GM12878 (cell line): ENCODE measurements at regions of chr7 and their contacts with region 1.

Region 1: DNA sequence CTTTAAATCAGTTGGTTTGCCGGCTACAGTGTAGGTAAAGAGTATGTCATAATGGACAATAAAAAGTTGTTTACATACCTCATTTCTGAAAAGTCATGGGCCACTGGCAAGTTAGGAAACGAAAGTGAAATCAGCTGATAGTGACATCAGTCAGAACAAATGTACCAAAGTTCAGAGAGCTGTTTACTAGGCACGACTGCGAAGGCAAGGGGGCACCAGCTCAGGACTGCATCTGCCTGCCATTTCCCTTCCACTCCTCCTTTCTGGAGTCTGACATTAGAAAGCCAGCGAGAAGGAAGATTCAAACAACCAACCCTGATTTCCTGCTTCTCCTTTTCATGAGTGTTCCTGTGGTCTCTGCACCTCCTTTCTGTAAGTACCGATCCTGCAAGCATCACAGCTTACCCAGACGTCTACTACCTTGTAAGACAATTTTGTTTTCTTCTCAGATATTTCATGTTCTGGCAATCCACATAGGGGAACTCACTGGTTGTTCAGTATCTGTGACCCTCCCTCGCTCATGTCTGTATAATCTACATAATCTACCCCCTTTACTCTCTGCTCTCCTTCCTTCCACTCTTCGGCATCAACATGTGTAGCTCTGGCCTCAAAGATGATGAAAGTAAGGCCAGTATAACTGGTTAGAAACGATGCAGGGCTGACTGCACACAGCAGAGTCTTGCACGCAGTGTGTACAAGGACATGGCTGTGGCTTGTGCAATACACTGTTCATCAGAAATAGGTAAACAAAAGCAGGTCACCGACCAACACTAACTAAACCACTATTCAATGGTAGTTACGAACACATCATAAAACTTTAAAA is at the start of gene TMEM140:
- DNase-seq: peak; percentile 90
- ATAC-seq: peak; percentile 78
- H3K4me3 ChIP-seq: peak within 1 kb of the TSS; percentile 67
- H3K27ac ChIP-seq: peak within 1 kb of the TSS; percentile 73
- H3K4me1 ChIP-seq: peaks cover 27% of the 10 kb centered on the region
- H3K27me3 ChIP-seq: no peaks in the 10 kb centered on the region
- CTCF ChIP-seq: no peak
- EP300 ChIP-seq: peak; percentile 86 to 89; a peak in 3 of 4 replicates
- POLR2A ChIP-seq: peak; percentile 82
- RAD21 ChIP-seq: 0 out of 2 replicates have a peak, but pooled peaks have one; percentile 2
- polyA plus RNA-seq, gene TMEM140: 0.85 to 1.1 TPM

Region 2: DNA sequence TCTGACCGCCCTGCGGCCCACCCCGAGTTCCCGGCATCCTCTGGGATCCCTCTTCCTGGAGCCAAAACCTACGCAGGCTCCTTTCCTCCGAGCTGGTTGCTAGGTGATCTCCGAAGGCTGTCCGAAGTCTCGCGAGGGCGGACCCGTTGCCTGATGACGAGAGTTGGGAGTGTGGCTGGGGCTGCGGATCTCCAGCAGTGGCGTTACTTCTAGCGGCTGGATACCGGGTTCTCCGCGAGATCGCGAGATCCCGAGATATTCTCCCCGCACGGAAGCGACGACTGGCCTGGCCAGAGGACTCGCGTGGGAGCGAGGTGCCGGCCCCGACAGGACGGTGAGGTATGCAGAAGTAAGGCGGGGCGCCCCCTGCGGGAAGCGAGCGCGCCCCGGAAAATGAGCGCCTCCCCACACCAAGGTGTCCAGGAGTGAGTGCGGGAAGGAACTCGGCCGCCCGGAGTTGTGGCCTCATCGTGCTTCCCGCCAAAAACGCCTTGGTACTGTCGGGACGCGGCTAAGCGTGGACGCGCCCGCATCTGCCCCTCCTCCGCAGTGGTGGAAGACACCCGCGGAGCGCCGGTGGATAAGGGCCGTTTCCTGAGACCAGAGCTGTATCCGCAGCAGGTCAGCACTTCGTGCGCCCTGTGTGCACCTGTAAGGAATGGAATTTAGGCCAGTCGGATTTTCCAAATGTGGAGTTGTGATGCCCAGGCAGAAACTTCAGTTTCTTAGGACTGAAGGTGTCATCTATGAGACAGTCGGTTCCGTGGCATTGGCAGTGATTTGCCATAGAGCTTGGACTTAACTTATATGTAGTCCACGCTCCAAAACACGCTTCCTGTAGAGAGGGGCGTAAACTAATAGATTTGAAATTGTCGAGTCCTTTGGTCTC is 161.5 kb before region 1 on chr7 and contains the start of gene AGBL3:
- CTCF ChIA-PET with region 1: interaction called, 69 read pairs
- POLR2A ChIA-PET with region 1: interaction called, 121 read pairs
- RAD21 ChIA-PET with region 1: interaction called, 154 read pairs
- SMC1A ChIA-PET with region 1: interaction called, 293 read pairs
- in situ Hi-C with region 1: no loop called
- intact Hi-C with region 1: no loop called
- DNase-seq: peak; percentile 84
- ATAC-seq: peak; percentile 85
- H3K4me3 ChIP-seq: peak within 1 kb of the TSS; percentile 85
- H3K27ac ChIP-seq: peak within 1 kb of the TSS; percentile 97
- H3K4me1 ChIP-seq: peaks cover 11% of the 10 kb centered on the region
- H3K27me3 ChIP-seq: no peaks in the 10 kb centered on the region
- CTCF ChIP-seq: peak; percentile 59 to 75 (median 73)
- EP300 ChIP-seq: peak in 1 of 2 experiments; percentile 41; a peak in 1 of 4 replicates
- POLR2A ChIP-seq: peak; percentile 88
- RAD21 ChIP-seq: no peak
- polyA plus RNA-seq, gene AGBL3: 0.82 to 1.4 TPM

Region 3: GRCh38 chr7:135102372-135102771 is 45.7 kb before region 1 on chr7:
- CTCF ChIA-PET with region 1: no interaction called
- POLR2A ChIA-PET with region 1: no interaction called
- RAD21 ChIA-PET with region 1: interaction called, 3 read pairs
- SMC1A ChIA-PET with region 1: interaction called, 6 read pairs
- in situ Hi-C with region 1: no loop called
- intact Hi-C with region 1: loop called (anchors 5 kb)
- DNase-seq: peak; percentile 41
- ATAC-seq: peak; percentile 99
- H3K4me3 ChIP-seq: no peak overlapping the region
- H3K27ac ChIP-seq: no peak overlapping the region
- H3K4me1 ChIP-seq: no peaks in the 10 kb centered on the region
- H3K27me3 ChIP-seq: no peaks in the 10 kb centered on the region
- CTCF ChIP-seq: no peak
- EP300 ChIP-seq: peak in 1 of 2 experiments; percentile 64; a peak in 1 of 4 replicates
- POLR2A ChIP-seq: no peak
- RAD21 ChIP-seq: no peak

Region 4: DNA sequence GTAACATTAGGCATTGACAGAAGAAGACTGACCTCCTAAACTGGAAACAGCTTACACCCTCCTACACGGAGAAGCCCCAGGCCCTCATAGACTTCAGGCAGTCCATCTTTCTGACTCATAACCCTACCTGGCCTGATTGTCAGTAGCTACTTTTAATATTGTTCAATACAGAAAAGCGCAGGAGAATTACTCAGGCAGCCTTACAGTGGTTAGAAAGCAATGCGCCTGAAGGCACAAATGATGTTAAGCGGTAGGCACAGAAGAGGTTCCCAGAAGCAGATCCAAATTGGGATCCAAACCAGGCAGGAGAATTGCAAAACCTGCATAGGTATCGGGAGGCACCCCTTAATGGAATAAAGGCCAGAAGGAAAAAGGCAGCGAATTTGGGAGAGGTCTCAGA is 27.8 kb after region 1 on chr7:
- CTCF ChIA-PET with region 1: interaction called, 86 read pairs
- POLR2A ChIA-PET with region 1: interaction called, 169 read pairs
- RAD21 ChIA-PET with region 1: interaction called, 73 read pairs
- SMC1A ChIA-PET with region 1: interaction called, 158 read pairs
- in situ Hi-C with region 1: no loop called
- intact Hi-C with region 1: no loop called
- DNase-seq: no peak
- ATAC-seq: no peak; the same call in 2 of the 3 replicates
- H3K4me3 ChIP-seq: peak overlapping the region; percentile 51
- H3K27ac ChIP-seq: no peak overlapping the region
- H3K4me1 ChIP-seq: peaks cover 5% of the 10 kb centered on the region
- H3K27me3 ChIP-seq: no peaks in the 10 kb centered on the region
- CTCF ChIP-seq: no peak
- EP300 ChIP-seq: no peak
- POLR2A ChIP-seq: no peak
- RAD21 ChIP-seq: no peak

Region 5: GRCh38 chr7:135211179-135211945 is 63.3 kb after region 1 on chr7 and contains the start of gene WDR91:
- CTCF ChIA-PET with region 1: interaction called, 5 read pairs
- POLR2A ChIA-PET with region 1: interaction called, 5 read pairs
- RAD21 ChIA-PET with region 1: interaction called, 24 read pairs
- SMC1A ChIA-PET with region 1: interaction called, 10 read pairs
- in situ Hi-C with region 1: no loop called
- intact Hi-C with region 1: no loop called
- DNase-seq: peak; percentile 81
- ATAC-seq: peak; percentile 83
- H3K4me3 ChIP-seq: peak within 1 kb of the TSS; percentile 99
- H3K27ac ChIP-seq: peak within 1 kb of the TSS; percentile 91
- H3K4me1 ChIP-seq: peaks cover 39% of the 10 kb centered on the region
- H3K27me3 ChIP-seq: no peaks in the 10 kb centered on the region
- CTCF ChIP-seq: no peak
- EP300 ChIP-seq: no peak
- POLR2A ChIP-seq: peak; percentile 98
- RAD21 ChIP-seq: no peak
- polyA plus RNA-seq, gene WDR91: 7.6 to 10.1 TPM

Region 6: GRCh38 chr7:135782377-135782776 is 634.3 kb after region 1 on chr7:
- CTCF ChIA-PET with region 1: no interaction called
- POLR2A ChIA-PET with region 1: no interaction called
- RAD21 ChIA-PET with region 1: no interaction called
- SMC1A ChIA-PET with region 1: no interaction called
- in situ Hi-C with region 1: no loop called
- intact Hi-C with region 1: no loop called
- DNase-seq: no peak
- ATAC-seq: no peak
- H3K4me3 ChIP-seq: no peak overlapping the region
- H3K27ac ChIP-seq: no peak overlapping the region
- H3K4me1 ChIP-seq: no peaks in the 10 kb centered on the region
- H3K27me3 ChIP-seq: peaks cover 0 to 3% of the 10 kb centered on the region in 2 experiments; a peak in 1 of 4 replicates
- CTCF ChIP-seq: no peak
- EP300 ChIP-seq: no peak
- POLR2A ChIP-seq: no peak
- RAD21 ChIP-seq: no peak